OCI-LY7 (cell line): ENCODE measurements at regions of chr20 and their contacts with region 1.

Region 1: DNA sequence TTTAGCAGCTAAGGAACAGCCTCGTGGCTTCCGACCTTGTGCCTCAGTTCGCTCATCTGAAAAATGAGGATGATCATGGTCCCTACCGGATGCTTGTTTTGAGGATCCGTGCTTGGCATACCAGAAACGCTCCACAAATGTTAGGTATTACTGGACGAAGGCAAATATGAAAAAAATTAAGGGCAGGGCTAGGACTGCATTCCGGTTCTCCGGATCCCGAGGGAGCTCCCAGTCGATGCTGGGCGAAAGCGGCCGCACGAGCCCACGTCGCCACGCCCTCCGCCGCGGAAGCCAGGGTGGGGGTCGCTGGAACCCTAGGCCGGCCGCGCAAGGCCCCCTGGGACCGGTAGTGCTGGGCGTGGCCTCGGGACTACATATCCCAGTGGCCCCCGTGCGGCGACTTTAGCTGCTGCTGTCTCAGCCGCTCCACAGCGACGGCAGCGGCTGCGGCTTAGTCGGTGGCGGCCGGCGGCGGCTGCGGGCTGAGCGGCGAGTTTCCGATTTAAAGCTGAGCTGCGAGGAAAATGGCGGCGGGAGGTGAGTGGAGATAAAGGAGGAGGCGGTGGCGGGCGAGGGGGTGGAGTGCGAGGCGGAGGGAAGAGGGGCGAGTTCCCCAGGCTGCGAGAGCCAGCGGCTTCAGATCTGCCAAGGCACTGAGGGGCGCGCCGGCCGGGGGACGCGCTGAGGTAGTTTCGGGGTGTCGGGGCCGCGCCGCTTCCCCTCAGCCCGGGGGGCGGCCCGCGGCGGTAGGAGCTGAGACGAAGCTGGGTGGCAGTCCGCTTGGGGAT is at the start of gene NCOA3:
- DNase-seq: peak; percentile 98
- H3K4me3 ChIP-seq: peak within 1 kb of the TSS; percentile 82
- H3K27ac ChIP-seq: peak within 1 kb of the TSS; percentile 80
- H3K4me1 ChIP-seq: peaks cover 49% of the 10 kb centered on the region
- CTCF ChIP-seq: peak; percentile 45
- total RNA-seq, gene NCOA3: 45.4 and 50.5 TPM in 2 replicates

Region 2: DNA sequence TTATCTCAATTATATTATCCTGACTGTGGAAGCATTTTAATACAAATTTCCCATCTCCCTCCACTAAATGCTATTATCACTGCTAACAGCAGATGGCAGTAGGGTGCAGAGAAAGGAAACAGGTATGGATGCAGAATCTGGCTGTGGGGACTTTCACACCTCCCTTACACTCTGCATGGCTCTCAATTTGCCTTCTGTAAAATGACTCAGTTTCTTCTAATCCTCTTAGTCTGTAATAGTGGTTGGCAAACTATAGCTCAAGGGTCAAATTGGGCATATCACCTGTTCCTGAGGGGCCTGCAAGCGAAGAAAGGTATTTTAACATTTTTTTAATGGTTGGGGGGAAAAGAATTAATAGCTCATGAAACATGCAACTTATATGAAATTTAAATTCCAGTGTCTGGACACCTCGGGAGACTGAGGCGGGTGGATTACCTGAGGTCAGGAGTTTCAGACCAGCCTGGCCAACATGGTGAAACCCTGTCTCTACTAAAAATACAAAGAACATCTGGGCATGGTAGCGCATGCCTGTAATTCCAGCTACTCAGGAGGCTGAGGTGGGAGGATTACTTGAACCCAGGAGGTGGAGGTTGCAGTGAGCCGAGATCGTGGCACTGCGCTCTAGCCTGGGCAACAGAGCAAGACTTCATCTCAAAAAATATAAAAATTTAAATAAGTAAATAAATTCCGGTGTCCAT is 228.6 kb before region 1 on chr20:
- CTCF ChIA-PET with region 1: no interaction called
- POLR2A ChIA-PET with region 1: no interaction called
- intact Hi-C with region 1: loop called (anchors 5 kb)
- DNase-seq: peak; percentile 75
- H3K4me3 ChIP-seq: no peak overlapping the region
- H3K27ac ChIP-seq: peak overlapping the region; percentile 3
- H3K4me1 ChIP-seq: peaks cover 39% of the 10 kb centered on the region
- CTCF ChIP-seq: peak; percentile 98

Region 3: GRCh38 chr20:47432211-47433210 is 69.2 kb before region 1 on chr20:
- CTCF ChIA-PET with region 1: no interaction called
- POLR2A ChIA-PET with region 1: interaction called, 6 read pairs
- intact Hi-C with region 1: loop called (anchors 5 kb)
- DNase-seq: no peak
- H3K4me3 ChIP-seq: peak overlapping the region; percentile 22
- H3K27ac ChIP-seq: peak overlapping the region; percentile 76
- H3K4me1 ChIP-seq: peaks cover 64% of the 10 kb centered on the region
- CTCF ChIP-seq: no peak

Region 4: GRCh38 chr20:47453142-47453782 is 48.4 kb before region 1 on chr20:
- CTCF ChIA-PET with region 1: no interaction called
- POLR2A ChIA-PET with region 1: interaction called, 5 read pairs
- intact Hi-C with region 1: loop called (anchors 5 kb)
- DNase-seq: peak; percentile 70
- H3K4me3 ChIP-seq: no peak overlapping the region
- H3K27ac ChIP-seq: peak overlapping the region; percentile 46
- H3K4me1 ChIP-seq: peaks cover 66% of the 10 kb centered on the region
- CTCF ChIP-seq: no peak

Region 5: DNA sequence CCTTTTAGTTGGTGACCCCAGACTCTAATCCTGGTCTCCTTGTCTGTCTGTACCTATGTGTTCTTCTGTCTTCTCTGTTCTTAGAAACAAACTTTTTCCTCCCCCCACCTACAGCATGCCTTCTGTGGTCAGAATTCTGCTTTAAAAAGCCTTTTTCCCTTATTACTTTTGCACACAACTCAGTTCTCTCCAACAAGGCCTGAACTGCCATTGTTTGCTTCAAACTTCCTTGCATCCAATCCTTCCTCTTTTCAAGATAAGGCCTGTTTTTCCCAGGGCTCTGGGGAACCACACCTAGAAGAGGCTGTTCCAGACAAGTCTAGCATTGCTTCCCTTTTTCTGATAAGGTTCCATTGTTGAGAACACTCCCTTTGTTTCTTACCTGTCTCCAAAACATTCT is 22.2 kb before region 1 on chr20:
- CTCF ChIA-PET with region 1: no interaction called
- POLR2A ChIA-PET with region 1: interaction called, 21 read pairs
- intact Hi-C with region 1: no loop called
- DNase-seq: no peak
- H3K4me3 ChIP-seq: no peak overlapping the region
- H3K27ac ChIP-seq: peak overlapping the region; percentile 56
- H3K4me1 ChIP-seq: peaks cover 80% of the 10 kb centered on the region
- CTCF ChIP-seq: no peak

Region 6: DNA sequence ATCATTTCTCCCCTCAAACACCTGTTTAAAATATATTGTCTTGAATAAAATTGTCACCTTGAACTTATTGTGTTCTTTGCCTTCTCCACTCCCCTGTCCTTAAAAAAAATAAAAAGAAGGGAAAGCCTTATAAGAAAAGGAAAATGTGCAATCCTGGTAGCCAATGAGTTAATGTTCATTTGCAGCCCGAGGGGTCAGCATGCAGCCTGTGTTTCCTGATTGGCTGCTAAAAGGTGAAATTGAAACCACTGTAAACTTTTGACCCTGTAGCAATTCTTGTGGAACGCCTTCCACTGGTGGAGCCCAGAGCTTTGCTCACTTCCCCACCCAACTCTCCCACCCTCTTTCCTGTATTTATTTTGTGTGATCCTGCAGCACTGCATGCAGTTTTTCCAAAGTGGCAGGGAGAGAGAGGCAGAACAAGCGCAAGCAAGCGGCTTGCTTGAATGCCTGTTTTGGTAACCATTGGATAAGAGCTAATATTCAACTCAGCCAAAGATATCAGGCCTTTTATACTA is 74.9 kb after region 1 on chr20:
- CTCF ChIA-PET with region 1: no interaction called
- POLR2A ChIA-PET with region 1: interaction called, 3 read pairs
- intact Hi-C with region 1: loop called (anchors 5 kb)
- DNase-seq: peak; percentile 72
- H3K4me3 ChIP-seq: peak overlapping the region; percentile 62
- H3K27ac ChIP-seq: peak overlapping the region; percentile 76
- H3K4me1 ChIP-seq: peaks cover 67% of the 10 kb centered on the region
- CTCF ChIP-seq: no peak